G401 (cell line): ENCODE measurements at regions of chr18 and their contacts with region 1.

Region 1: DNA sequence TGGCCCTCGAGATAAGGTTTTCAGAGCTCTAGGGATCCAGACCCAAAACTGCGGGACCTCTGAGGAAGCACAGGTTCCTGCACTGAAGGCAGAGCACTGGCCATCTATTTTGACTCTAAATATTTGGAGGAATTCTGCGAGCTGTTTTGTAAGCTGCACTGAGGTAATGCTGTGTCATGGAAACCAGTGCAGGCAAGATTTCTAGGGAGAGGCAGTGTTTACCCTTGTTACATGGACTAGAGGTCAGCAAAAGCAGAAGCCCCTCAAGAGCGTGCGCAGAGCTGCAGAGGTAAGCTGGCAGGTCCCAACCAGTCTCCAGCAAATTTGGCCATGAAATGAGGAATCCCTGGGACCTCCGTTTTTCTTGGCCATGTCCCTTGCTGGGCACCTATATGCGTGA is 137.3 kb downstream of the RNF152 start:
- DNase-seq: no peak

Region 2: GRCh38 chr18:61797696-61798590 is 42.4 kb after region 1 on chr18:
- in situ Hi-C with region 1: loop called (anchors 5 kb)
- DNase-seq: no peak